ENCODE measurements at regions of chr11 and their contacts with region 1.

Region 1: GRCh38 chr11:9230291-9230690 is 34.9 kb downstream of the DENND5A start:
- H3K4me3 ChIP-seq: no peak overlapping the region
- H3K27ac ChIP-seq: no peak overlapping the region
- H3K4me1 ChIP-seq: peaks cover 8% of the 10 kb centered on the region
- CTCF ChIP-seq: no peak

Region 2: GRCh38 chr11:8941341-8942103 is 288.8 kb before region 1 on chr11:
- CTCF ChIA-PET with region 1: no interaction called
- POLR2A ChIA-PET with region 1: interaction called, 10 read pairs
- H3K4me3 ChIP-seq: no peak overlapping the region
- H3K27ac ChIP-seq: no peak overlapping the region
- H3K4me1 ChIP-seq: no peaks in the 10 kb centered on the region
- CTCF ChIP-seq: no peak

Region 3: GRCh38 chr11:9253086-9253485 is 22.8 kb after region 1 on chr11:
- CTCF ChIA-PET with region 1: no interaction called
- POLR2A ChIA-PET with region 1: no interaction called
- H3K4me3 ChIP-seq: no peak overlapping the region
- H3K27ac ChIP-seq: no peak overlapping the region
- H3K4me1 ChIP-seq: no peaks in the 10 kb centered on the region
- CTCF ChIP-seq: no peak